ENCODE measurements at regions of chr19 and their contacts with region 1.

Region 1: DNA sequence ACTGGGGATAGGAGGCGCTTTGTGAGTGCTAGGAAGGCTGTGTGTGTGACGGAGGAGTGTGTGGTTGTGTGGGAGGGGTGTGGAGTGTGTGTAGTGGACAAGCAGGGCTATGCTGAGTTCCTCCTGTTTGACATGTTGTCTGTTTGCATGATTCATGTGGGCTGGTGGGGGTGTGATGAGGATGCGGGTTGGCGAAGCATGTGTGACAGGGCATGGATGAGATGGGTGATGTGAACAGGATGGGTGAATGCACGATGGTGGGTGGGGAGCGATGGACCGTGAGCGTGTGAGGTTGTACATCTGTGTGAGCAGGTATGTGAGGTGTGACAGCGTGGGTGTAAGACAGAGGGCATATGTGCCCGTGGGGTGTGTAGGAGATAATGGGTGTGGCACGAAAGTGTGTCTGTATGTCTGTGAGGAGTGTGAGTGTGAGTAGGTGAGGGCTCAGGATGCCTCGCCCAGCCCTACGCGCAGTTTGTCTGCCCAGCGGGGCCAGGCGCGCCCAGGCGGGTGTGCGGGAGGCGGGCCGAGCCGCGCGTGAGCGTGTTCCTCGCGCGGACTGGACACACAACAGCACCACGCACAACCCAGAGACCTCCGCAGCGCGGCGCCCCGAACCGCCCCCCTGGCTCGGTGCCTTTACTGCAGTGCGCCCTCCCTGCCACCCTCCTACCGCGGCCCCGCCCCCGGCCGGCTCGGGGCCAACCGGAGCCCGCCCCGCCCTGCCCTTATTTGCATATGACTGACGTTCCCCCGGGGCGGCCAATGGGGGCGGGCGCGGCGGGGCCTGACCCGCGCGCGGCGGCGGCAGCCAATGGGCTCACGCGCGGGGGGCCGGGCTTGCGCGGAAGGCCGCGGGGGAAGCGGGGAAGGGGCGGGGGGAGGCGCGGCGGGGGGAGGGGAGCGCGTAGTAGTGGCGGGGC is 14.4 kb downstream of the CIC start:
- DNase-seq: peak; percentile 69
- ATAC-seq: peak; percentile 73
- H3K4me3 ChIP-seq: peak overlapping the region; percentile 29 to 59
- H3K27ac ChIP-seq: peak overlapping the region; percentile 94
- H3K4me1 ChIP-seq: peaks cover 41 to 69% of the 10 kb centered on the region in 2 experiments
- H3K27me3 ChIP-seq: no peaks in the 10 kb centered on the region
- CTCF ChIP-seq: no peak
- POLR2A ChIP-seq: no peak
- RAD21 ChIP-seq: no peak

Region 2: DNA sequence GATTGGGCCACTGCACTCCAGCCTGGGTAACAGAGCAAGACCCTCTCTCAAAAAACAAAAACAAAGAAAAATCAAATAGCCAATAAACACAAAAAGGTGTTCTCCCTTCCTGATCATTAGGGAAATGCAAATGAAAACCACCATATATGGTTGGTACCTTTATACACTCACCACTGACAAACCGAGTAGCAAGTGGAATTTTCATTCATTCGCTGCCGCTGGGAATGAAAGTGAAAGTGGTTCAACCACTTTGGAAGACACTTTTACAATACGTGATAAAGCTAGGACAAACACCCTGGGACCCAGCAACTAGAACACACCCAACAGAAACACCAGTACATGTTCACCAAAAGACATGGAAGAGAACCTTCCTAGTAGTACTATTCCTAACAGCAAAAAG is 234.4 kb before region 1 on chr19:
- CTCF ChIA-PET with region 1: no interaction called
- POLR2A ChIA-PET with region 1: no interaction called
- RAD21 ChIA-PET with region 1: no interaction called
- intact Hi-C with region 1: no loop called
- DNase-seq: no peak
- ATAC-seq: no peak
- H3K4me3 ChIP-seq: no peak overlapping the region
- H3K27ac ChIP-seq: no peak overlapping the region
- H3K4me1 ChIP-seq: peaks cover 5 to 19% of the 10 kb centered on the region in 2 experiments; a peak in 2 of 4 replicates
- H3K27me3 ChIP-seq: no peaks in the 10 kb centered on the region
- CTCF ChIP-seq: no peak
- POLR2A ChIP-seq: no peak
- RAD21 ChIP-seq: no peak

Region 3: DNA sequence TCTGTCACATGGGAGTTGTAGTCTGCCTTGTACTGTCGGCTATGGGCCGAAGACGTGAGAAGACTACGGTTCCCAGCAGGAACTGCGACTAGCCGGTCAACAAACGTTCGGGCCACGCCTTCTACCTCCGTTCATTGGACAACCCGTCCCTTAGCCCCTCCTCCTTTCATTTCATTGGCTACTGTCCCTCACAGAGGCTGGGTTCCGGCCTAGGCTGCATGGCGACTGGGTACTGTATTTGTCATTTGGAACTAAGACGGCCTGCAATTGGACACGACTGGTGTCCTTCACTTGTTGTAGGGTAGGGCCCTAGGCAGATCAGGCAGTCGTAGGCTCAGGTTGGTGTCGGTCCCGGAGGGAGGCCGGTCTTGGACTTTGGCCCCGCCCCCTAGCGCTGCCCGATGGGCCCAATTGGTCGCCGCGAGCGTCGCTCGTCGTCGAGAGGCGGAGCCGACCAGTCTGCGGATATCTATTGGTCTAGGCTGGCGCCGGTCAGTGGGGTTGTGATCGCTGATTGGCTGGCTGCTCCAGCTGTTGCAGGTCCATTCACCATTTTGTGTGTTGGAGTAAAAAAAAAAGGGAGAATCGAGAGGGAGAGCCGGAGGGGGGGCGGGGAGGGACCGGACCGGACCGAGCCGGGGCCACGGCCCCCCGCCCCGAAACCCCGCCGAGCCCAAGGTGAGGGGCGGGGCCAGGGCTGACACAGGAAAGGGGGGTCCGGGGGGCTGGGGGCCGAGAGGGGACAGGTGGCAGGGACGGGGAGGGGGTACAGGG is 14.5 kb before region 1 on chr19 and contains the start of gene CIC:
- CTCF ChIA-PET with region 1: interaction called, 22 read pairs
- POLR2A ChIA-PET with region 1: interaction called, 4 read pairs
- RAD21 ChIA-PET with region 1: no interaction called
- intact Hi-C with region 1: no loop called
- DNase-seq: peak; percentile 100
- ATAC-seq: peak; percentile 87
- H3K4me3 ChIP-seq: peak within 1 kb of the TSS; percentile 74 to 80
- H3K27ac ChIP-seq: peak within 1 kb of the TSS; percentile 90
- H3K4me1 ChIP-seq: peaks cover 23 to 32% of the 10 kb centered on the region in 2 experiments
- H3K27me3 ChIP-seq: no peaks in the 10 kb centered on the region
- CTCF ChIP-seq: no peak
- POLR2A ChIP-seq: no peak
- RAD21 ChIP-seq: no peak
- total RNA-seq, gene CIC: 52.0 TPM

Measured in HCT116 (cell line).